PC-9 (cell line): ENCODE measurements at regions of chr11 and their contacts with region 1.

Region 1: GRCh38 chr11:6638429-6638828 is 17.2 kb downstream of the DCHS1 start:
- DNase-seq: no peak
- H3K4me3 ChIP-seq: no peak overlapping the region
- H3K27ac ChIP-seq: no peak overlapping the region
- H3K4me1 ChIP-seq: no peaks in the 10 kb centered on the region; the same call in 1 of the 2 replicates
- H3K27me3 ChIP-seq: no peaks in the 10 kb centered on the region
- CTCF ChIP-seq: no peak

Region 2: DNA sequence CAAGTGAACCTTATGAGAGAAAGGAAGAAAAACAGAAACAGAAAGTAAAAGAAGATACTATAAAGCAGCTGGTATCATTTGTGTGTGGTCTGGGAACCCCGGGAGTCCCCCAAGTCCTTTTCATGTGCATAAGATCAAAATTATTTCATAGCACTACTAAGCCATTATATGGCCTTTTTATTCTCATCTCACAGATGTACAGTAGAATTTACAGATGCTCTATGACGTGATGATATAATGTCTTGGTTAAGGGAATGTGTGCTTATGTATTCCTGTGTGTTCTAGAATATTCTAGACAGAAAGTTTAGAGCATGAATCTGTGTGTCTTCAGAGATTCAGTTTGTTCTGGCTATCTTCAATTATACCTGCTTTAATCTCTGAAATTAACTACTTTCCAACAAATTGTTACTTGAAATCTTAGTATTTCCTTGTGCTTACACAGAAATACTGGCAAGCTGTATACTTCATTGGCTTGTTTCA is 10.6 kb before region 1 on chr11:
- CTCF ChIA-PET with region 1: no interaction called
- POLR2A ChIA-PET with region 1: interaction called, 11 read pairs
- intact Hi-C with region 1: no loop called
- DNase-seq: no peak
- H3K4me3 ChIP-seq: no peak overlapping the region
- H3K27ac ChIP-seq: no peak overlapping the region
- H3K4me1 ChIP-seq: no peaks in the 10 kb centered on the region
- H3K27me3 ChIP-seq: no peaks in the 10 kb centered on the region
- CTCF ChIP-seq: no peak

Region 3: DNA sequence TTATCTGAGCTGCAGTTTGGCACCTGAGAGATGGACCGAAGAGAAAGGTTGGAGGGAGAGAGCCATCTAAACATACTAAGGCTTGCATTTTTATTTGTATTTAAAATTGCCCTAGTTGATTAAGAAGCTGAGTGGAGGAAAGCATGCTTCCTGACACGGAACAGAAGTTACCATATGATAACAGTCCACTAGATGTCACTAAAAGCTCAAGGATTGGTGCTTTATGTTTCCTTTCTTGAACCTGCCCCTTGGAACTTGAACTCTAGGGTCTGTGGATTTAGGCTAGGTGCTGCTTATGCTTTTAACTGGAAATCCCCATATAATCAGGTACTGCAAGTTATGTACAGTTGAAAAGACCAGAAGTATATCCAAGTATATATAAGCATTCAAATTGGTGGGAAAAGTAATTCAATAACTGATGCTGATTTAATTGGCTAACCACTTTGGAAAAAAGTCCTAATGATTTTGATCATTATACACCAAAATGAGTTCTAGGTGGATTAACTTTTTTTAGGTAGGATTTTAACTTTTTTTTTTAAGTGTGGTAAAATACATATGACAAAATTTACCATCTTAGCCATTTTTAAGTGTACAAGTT is 459.9 kb after region 1 on chr11:
- CTCF ChIA-PET with region 1: no interaction called
- POLR2A ChIA-PET with region 1: no interaction called
- intact Hi-C with region 1: no loop called
- DNase-seq: no peak
- H3K4me3 ChIP-seq: no peak overlapping the region
- H3K27ac ChIP-seq: no peak overlapping the region
- H3K4me1 ChIP-seq: no peaks in the 10 kb centered on the region
- H3K27me3 ChIP-seq: no peaks in the 10 kb centered on the region
- CTCF ChIP-seq: peak; percentile 71